Endothelial cell of umbilical vein (primary cell): ENCODE measurements at regions of chr10 and their contacts with region 1.

Region 1: GRCh38 chr10:87531908-87532622 is 27.4 kb downstream of the MINPP1 start:
- DNase-seq: peak; percentile 87
- H3K4me3 ChIP-seq: peak overlapping the region in 1 of 3 experiments; percentile 11
- H3K27ac ChIP-seq: peak overlapping the region; percentile 59
- H3K4me1 ChIP-seq: peaks cover 17% of the 10 kb centered on the region
- H3K27me3 ChIP-seq: no peaks in the 10 kb centered on the region
- CTCF ChIP-seq: no peak
- POLR2A ChIP-seq: no peak

Region 2: GRCh38 chr10:87519582-87519981 is 12.5 kb before region 1 on chr10:
- CTCF ChIA-PET with region 1: interaction called, 10 read pairs
- POLR2A ChIA-PET with region 1: no interaction called
- dilution Hi-C with region 1: no loop called
- intact Hi-C with region 1: no loop called
- DNase-seq: no peak
- H3K4me3 ChIP-seq: no peak overlapping the region
- H3K27ac ChIP-seq: no peak overlapping the region
- H3K4me1 ChIP-seq: no peaks in the 10 kb centered on the region
- H3K27me3 ChIP-seq: no peaks in the 10 kb centered on the region
- CTCF ChIP-seq: no peak
- POLR2A ChIP-seq: no peak

Region 3: GRCh38 chr10:87691506-87692070 is 159.5 kb after region 1 on chr10:
- CTCF ChIA-PET with region 1: no interaction called
- POLR2A ChIA-PET with region 1: no interaction called
- dilution Hi-C with region 1: no loop called
- intact Hi-C with region 1: no loop called
- DNase-seq: no peak
- H3K4me3 ChIP-seq: no peak overlapping the region
- H3K27ac ChIP-seq: no peak overlapping the region
- H3K4me1 ChIP-seq: peaks cover 6% of the 10 kb centered on the region
- H3K27me3 ChIP-seq: no peaks in the 10 kb centered on the region
- CTCF ChIP-seq: no peak
- POLR2A ChIP-seq: no peak

Region 4: DNA sequence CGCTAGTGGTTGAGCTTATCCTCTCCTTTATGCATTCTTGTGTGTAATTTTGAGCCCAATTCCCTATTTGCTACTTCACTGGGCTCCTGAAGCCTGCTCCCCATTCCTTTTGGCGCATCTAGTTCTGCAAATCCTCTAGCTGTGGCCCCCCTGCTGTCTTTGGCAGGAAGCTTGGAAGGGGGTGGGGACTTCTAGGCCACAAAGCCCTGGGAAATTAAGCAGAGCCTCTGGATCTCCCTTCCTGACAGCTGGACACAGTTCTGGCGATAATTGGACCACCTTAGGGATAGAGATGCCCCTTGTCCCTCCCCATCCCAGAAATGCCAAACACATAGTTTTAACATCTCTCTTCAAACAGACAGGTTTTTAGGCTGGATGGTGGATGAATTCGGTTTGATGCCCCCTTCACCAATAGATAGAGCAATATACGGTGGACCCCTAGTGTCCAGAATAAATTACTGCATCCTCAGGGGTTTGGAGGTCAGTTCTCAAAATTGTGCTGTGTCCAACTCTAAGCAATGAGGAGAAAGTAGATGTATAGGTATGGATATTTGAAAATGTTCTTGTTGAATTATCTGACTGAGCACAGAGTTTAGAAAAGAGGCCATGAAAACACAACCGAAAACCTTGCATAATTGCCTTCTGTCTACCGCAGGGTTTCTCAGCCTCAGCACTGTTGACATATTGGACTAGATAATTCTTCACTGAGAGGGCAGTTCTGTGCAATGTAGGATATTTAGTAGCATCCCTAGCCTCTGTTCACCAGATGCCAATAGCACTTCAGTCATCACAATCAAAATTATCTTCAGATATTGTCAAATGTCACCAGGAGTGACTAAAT is 203.1 kb after region 1 on chr10:
- CTCF ChIA-PET with region 1: interaction called, 15 read pairs
- POLR2A ChIA-PET with region 1: no interaction called
- dilution Hi-C with region 1: no loop called
- intact Hi-C with region 1: loop called (anchors 1 kb)
- DNase-seq: peak; percentile 70
- H3K4me3 ChIP-seq: no peak overlapping the region
- H3K27ac ChIP-seq: no peak overlapping the region
- H3K4me1 ChIP-seq: peaks cover 9% of the 10 kb centered on the region
- H3K27me3 ChIP-seq: no peaks in the 10 kb centered on the region
- CTCF ChIP-seq: peak; percentile 49 to 68
- POLR2A ChIP-seq: no peak

Region 5: DNA sequence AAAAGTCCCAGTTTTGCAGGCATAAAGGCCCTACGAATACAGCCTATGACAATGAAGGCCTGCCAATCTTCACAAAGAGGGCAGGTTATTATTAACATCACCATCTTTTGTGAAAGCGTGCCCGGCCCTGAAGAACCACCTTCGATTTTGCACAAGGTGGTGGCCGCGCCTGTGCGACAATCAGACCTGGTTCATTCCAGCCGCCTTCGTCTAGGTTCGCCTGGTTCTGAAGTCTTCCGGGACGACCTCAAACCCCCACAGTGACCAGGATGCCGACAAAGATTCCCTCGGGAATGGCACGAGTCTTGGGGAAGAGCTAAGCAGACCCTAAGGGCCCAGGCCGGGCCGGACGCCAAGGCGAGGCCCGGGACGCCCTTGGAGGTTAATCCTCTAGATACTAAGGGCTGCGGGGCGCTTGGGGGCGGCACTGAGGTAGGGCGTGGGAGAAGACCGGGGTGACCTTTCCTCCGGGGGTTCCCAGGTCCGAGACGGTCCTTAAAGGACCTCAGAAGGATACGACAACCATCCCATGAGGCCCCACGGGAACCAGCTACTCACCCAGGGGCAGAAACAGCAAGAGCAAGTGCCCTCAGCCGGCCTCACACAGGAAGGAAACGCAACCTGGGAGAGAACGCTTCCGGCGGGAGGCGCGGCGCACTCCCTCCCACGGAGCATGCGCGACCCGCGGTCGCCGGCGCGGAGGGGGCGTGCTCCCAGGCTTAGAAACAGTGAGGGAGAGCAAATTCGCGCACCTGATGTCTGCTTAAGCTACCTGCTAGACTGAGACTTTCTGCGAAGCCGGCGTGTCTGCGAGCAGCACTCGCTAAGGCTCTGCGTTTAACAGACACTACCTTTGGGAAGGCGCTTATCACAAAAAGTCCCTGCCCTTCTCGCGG is 285.8 kb after region 1 on chr10 and contains the start of gene ATAD1:
- CTCF ChIA-PET with region 1: no interaction called
- POLR2A ChIA-PET with region 1: no interaction called
- dilution Hi-C with region 1: no loop called
- intact Hi-C with region 1: loop called (anchors 2 kb)
- DNase-seq: peak; percentile 80
- H3K4me3 ChIP-seq: peak within 1 kb of the TSS; percentile 61 to 88 (median 78)
- H3K27ac ChIP-seq: peak within 1 kb of the TSS; percentile 68
- H3K4me1 ChIP-seq: peaks cover 22% of the 10 kb centered on the region
- H3K27me3 ChIP-seq: no peaks in the 10 kb centered on the region
- CTCF ChIP-seq: peak in 1 of 2 donors; percentile 5
- POLR2A ChIP-seq: peak; percentile 77
- total RNA-seq, gene ATAD1: 23.6 and 25.8 TPM in 2 replicates

Region 6: GRCh38 chr10:88553116-88553752 is 1021.2 kb after region 1 on chr10:
- CTCF ChIA-PET with region 1: no interaction called
- POLR2A ChIA-PET with region 1: no interaction called
- dilution Hi-C with region 1: no loop called
- intact Hi-C with region 1: loop called (anchors 5 kb)
- DNase-seq: peak; percentile 76
- H3K4me3 ChIP-seq: no peak overlapping the region
- H3K27ac ChIP-seq: no peak overlapping the region
- H3K4me1 ChIP-seq: no peaks in the 10 kb centered on the region
- H3K27me3 ChIP-seq: no peaks in the 10 kb centered on the region
- CTCF ChIP-seq: peak; percentile 63 to 64
- POLR2A ChIP-seq: no peak